ENCODE measurements at regions of chr16 and their contacts with region 1.

Region 1: DNA sequence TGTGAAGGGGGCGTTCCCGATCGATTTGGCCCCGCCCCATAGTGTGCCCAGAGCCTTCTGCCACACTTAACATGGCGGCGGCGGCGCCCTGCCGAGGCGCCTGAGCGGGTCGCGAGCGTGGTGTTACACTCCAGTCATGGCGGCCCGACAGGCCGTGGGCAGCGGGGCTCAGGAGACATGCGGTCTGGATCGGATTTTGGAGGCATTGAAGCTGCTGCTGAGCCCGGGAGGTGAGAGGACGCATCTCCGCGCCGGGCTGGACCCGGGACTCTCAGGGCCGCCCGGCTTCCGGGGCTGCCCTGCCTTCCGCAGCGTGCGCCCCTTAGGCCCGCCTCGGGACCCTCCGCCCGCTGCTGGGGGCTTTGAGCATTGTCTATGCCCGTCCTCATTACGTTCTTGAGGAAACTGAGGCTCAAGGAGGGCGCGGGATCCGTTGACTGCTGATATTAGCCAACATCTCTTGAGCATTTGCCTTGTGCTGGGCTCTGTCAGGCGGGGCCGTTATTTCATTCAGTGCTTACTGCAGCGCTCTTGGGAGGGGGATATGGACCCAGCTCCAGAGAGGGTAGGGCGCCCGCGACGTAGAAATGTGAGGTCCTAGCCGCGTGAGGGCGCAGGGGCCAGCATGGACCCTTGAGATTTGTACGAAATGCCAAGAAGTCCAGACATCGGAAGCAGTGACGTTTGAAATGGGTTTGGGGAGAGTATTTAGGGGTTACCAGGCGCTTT is at the start of gene TANGO6:
- DNase-seq: peak; percentile 72 to 78 (median 77)
- H3K4me3 ChIP-seq: peak within 1 kb of the TSS; percentile 91 to 95 (median 94)
- H3K4me3 Mint-ChIP-seq: peak within 1 kb of the TSS; percentile 91 to 97
- H3K27ac ChIP-seq: peak within 1 kb of the TSS; percentile 43 to 86
- H3K27ac Mint-ChIP-seq: peak within 1 kb of the TSS; percentile 80 to 92 (median 90)
- H3K4me1 ChIP-seq: peaks cover 12 to 15% of the 10 kb centered on the region in 2 donors
- H3K4me1 Mint-ChIP-seq: peaks cover 22% of the 10 kb centered on the region
- H3K27me3 ChIP-seq: no peaks in the 10 kb centered on the region
- H3K27me3 Mint-ChIP-seq: peaks cover 5 to 19% (median 6%) of the 10 kb centered on the region in 3 donors
- CTCF ChIP-seq: no peak
- polyA plus RNA-seq, gene TANGO6: 6.5 to 8.1 (median 7.3) TPM

Region 2: GRCh38 chr16:68528686-68529379 is 314.8 kb before region 1 on chr16:
- intact Hi-C with region 1: loop called (anchors 2 to 10 kb)
- DNase-seq: peak; percentile 68 to 77 (median 74)
- H3K4me3 ChIP-seq: no peak overlapping the region
- H3K4me3 Mint-ChIP-seq: peak overlapping the region in 1 of 2 donors; percentile 91
- H3K27ac ChIP-seq: no peak overlapping the region
- H3K27ac Mint-ChIP-seq: no peak overlapping the region
- H3K4me1 ChIP-seq: peaks cover 18 to 20% of the 10 kb centered on the region in 2 donors
- H3K4me1 Mint-ChIP-seq: peaks cover 17% of the 10 kb centered on the region
- H3K27me3 ChIP-seq: peaks cover 6 to 27% of the 10 kb centered on the region in 2 donors
- H3K27me3 Mint-ChIP-seq: peaks cover 10 to 38% (median 35%) of the 10 kb centered on the region in 3 donors
- CTCF ChIP-seq: peak; percentile 93

Region 3: GRCh38 chr16:68538880-68539701 is 304.6 kb before region 1 on chr16 and contains the start of gene ZFP90:
- intact Hi-C with region 1: loop called in 1 of 2 experiments (anchors 10 kb)
- DNase-seq: peak; percentile 79 to 88 (median 80)
- H3K4me3 ChIP-seq: peak within 1 kb of the TSS; percentile 82 to 97 (median 96)
- H3K4me3 Mint-ChIP-seq: peak within 1 kb of the TSS; percentile 91 to 98
- H3K27ac ChIP-seq: peak within 1 kb of the TSS; percentile 53 to 80
- H3K27ac Mint-ChIP-seq: peak within 1 kb of the TSS; percentile 90 to 98 (median 96)
- H3K4me1 ChIP-seq: peaks cover 13 to 14% of the 10 kb centered on the region in 2 donors
- H3K4me1 Mint-ChIP-seq: peaks cover 14% of the 10 kb centered on the region
- H3K27me3 ChIP-seq: no peaks in the 10 kb centered on the region
- H3K27me3 Mint-ChIP-seq: peaks cover 0 to 3% (median 2%) of the 10 kb centered on the region in 3 donors
- CTCF ChIP-seq: no peak
- polyA plus RNA-seq, gene ZFP90: 4.2 to 7.9 (median 6.3) TPM

Measured in CD14-positive monocyte (primary cell).